ENCODE measurements at regions of chr3 and their contacts with region 1.

Region 1: GRCh38 chr3:111859974-111860859 is 1.2 kb downstream of the PHLDB2 start:
- DNase-seq: peak; percentile 93
- H3K4me3 Mint-ChIP-seq: peak overlapping the region; percentile 98
- H3K27ac Mint-ChIP-seq: peak overlapping the region; percentile 94
- H3K4me1 Mint-ChIP-seq: peaks cover 50% of the 10 kb centered on the region
- H3K27me3 Mint-ChIP-seq: no peaks in the 10 kb centered on the region
- CTCF ChIP-seq: peak; percentile 61

Region 2: GRCh38 chr3:111577794-111578685 is 282.2 kb before region 1 on chr3:
- CTCF ChIA-PET with region 1: interaction called, 8 read pairs
- POLR2A ChIA-PET with region 1: interaction called, 4 read pairs
- intact Hi-C with region 1: loop called (anchors 5 kb)
- DNase-seq: peak; percentile 81
- H3K4me3 Mint-ChIP-seq: no peak overlapping the region
- H3K27ac Mint-ChIP-seq: no peak overlapping the region
- H3K4me1 Mint-ChIP-seq: peaks cover 31% of the 10 kb centered on the region
- H3K27me3 Mint-ChIP-seq: no peaks in the 10 kb centered on the region
- CTCF ChIP-seq: peak; percentile 82

Region 3: DNA sequence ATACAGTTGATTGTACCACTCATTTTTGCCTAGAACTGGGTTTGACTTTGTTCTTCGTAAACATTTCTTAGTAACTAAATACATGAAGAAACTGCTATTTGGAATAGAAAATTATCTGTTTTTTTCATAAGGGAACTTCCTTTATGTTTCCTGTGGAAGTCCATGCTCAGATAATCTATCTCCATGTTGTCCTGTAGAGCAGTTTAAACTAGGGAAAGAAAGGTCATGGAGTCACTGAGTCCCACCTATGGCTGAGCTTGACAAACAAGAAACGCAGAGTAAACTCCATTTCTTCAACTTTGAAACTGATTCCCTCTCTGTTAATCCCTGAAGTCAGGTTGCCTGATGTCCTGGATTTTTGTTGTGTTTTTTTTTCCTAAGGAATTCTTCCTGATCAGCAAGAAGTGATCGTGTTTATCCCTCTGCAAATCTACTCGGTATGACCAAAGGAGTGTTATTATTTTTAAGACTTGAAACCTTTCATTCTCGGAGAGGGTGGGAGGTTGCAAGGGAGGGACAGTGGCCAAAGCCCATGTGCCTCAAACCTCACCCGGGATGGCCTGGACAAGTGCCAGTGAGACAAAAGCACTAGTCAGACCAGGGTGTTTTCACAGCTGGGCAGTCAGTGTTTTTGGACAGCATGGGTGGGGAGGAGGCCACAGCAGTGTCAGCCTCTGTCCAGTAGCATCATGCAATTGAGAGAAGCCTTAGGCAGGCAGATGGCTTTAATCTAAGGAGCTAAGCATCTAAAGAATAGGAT is 130.9 kb before region 1 on chr3:
- CTCF ChIA-PET with region 1: interaction called, 371 read pairs
- POLR2A ChIA-PET with region 1: interaction called, 207 read pairs
- intact Hi-C with region 1: no loop called
- DNase-seq: peak; percentile 79
- H3K4me3 Mint-ChIP-seq: peak overlapping the region; percentile 25
- H3K27ac Mint-ChIP-seq: peak overlapping the region; percentile 62
- H3K4me1 Mint-ChIP-seq: peaks cover 30% of the 10 kb centered on the region
- H3K27me3 Mint-ChIP-seq: no peaks in the 10 kb centered on the region
- CTCF ChIP-seq: no peak

Region 4: GRCh38 chr3:111751961-111752360 is 108.3 kb before region 1 on chr3:
- CTCF ChIA-PET with region 1: interaction called, 4 read pairs
- POLR2A ChIA-PET with region 1: interaction called, 11 read pairs
- intact Hi-C with region 1: no loop called
- DNase-seq: no peak
- H3K4me3 Mint-ChIP-seq: no peak overlapping the region
- H3K27ac Mint-ChIP-seq: peak overlapping the region; percentile 42
- H3K4me1 Mint-ChIP-seq: peaks cover 6% of the 10 kb centered on the region
- H3K27me3 Mint-ChIP-seq: no peaks in the 10 kb centered on the region
- CTCF ChIP-seq: no peak

Region 5: DNA sequence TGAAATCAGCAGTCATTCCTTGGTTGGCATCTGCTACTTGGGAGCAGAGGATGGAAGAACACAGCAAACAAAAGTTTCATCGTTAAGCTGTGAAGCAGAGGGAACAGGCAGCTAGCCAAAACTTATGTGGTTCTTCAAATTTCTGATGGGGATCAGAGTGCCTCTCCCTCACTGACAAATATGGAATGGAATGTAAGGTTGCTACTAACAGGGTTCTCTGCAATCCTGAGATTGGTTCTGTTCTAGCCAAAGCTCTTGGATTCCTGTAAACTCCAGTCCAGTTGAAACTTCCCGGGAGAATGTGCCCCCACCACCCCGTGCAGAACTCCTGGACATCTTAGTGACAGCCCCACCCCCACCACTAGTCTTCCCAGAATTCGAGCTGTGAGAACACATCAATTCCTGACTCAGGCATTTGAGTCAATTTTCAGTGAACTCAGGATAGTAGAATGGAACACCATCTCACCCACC is 57.1 kb before region 1 on chr3:
- CTCF ChIA-PET with region 1: interaction called, 60 read pairs
- POLR2A ChIA-PET with region 1: interaction called, 245 read pairs
- intact Hi-C with region 1: loop called (anchors 1 kb)
- DNase-seq: peak; percentile 97
- H3K4me3 Mint-ChIP-seq: peak overlapping the region; percentile 58
- H3K27ac Mint-ChIP-seq: peak overlapping the region; percentile 99
- H3K4me1 Mint-ChIP-seq: peaks cover 46% of the 10 kb centered on the region
- H3K27me3 Mint-ChIP-seq: no peaks in the 10 kb centered on the region
- CTCF ChIP-seq: no peak

Region 6: DNA sequence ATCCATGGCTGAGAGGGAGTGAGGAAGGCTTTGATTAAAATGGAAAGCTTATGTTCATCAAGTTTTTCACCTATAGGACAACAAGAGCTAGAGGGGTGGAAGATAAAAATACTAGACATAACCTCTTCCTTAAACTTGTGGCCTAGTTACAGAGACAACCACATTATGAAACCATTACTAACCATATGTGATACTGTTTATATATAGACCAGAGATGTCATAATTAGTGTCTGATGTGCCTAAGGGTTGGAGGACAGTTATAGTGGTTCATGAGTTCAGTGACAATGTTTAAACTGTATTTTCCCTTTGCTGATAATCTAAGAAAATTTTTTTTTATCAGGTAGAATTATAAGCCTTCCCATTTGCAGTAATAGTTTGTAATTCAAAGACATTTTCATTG is 22.6 kb after region 1 on chr3:
- CTCF ChIA-PET with region 1: interaction called, 15 read pairs
- POLR2A ChIA-PET with region 1: interaction called, 3 read pairs
- intact Hi-C with region 1: no loop called
- DNase-seq: no peak
- H3K4me3 Mint-ChIP-seq: no peak overlapping the region
- H3K27ac Mint-ChIP-seq: no peak overlapping the region
- H3K4me1 Mint-ChIP-seq: peaks cover 11% of the 10 kb centered on the region
- H3K27me3 Mint-ChIP-seq: no peaks in the 10 kb centered on the region
- CTCF ChIP-seq: no peak

Region 7: GRCh38 chr3:111967651-111968274 is 107.5 kb after region 1 on chr3:
- CTCF ChIA-PET with region 1: interaction called, 53 read pairs
- POLR2A ChIA-PET with region 1: interaction called, 18 read pairs
- intact Hi-C with region 1: loop called (anchors 1 kb)
- DNase-seq: peak; percentile 86
- H3K4me3 Mint-ChIP-seq: no peak overlapping the region
- H3K27ac Mint-ChIP-seq: peak overlapping the region; percentile 5
- H3K4me1 Mint-ChIP-seq: peaks cover 11% of the 10 kb centered on the region
- H3K27me3 Mint-ChIP-seq: no peaks in the 10 kb centered on the region
- CTCF ChIP-seq: peak; percentile 86

Region 8: DNA sequence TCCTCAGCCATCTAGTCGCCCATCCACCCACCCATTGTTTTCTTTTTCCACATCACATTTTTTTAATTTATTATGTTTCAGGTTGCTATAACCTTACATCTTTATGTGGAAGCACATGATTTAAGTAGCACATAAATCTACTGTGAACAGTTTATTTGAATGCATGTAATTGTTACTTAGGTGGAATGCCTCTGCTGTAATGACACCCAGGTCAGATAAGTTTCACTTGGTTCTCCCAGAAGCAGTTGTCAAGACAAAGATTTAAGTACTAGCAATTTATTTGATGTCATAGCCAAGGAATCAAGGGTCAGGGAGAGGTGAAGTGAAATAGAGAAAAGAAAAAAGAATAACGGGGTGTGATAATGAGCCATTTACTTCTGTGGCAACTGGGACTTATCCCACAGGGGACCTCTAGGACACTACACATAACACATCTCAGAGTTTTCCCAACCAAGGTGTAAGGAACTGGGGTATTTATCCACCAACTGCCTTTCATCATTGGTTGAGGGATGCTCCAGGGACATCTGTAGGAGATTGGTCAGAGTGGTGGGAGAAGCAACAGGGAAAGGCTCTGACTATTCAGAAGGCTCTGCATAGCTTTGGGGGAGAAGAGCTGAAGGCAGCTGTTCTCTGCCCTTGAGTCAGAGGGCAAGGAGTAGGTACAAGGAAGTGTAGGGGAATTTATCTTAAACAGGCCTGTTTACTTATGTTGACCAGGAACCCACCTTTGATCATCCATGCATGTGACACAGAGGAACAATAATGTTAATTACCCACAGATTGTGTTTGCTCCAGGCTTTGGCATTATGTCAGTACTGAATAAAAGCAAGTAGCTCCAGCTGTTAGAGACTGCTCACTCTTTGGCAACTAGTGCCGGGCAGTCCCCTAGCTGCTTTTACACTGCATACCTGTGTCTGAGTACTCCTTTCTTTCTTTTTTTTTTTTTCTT is 891.6 kb after region 1 on chr3:
- CTCF ChIA-PET with region 1: no interaction called
- POLR2A ChIA-PET with region 1: no interaction called
- intact Hi-C with region 1: no loop called
- DNase-seq: no peak
- H3K4me3 Mint-ChIP-seq: no peak overlapping the region
- H3K27ac Mint-ChIP-seq: no peak overlapping the region
- H3K4me1 Mint-ChIP-seq: peaks cover 2% of the 10 kb centered on the region
- H3K27me3 Mint-ChIP-seq: no peaks in the 10 kb centered on the region
- CTCF ChIP-seq: no peak